ENCODE measurements at regions of chr20 and their contacts with region 1.

Region 1: GRCh38 chr20:62302341-62303058 is at the start of gene ADRM1:
- DNase-seq: peak; percentile 76
- ATAC-seq: peak; percentile 80
- H3K4me3 ChIP-seq: peak within 1 kb of the TSS; percentile 83 to 94
- H3K27ac ChIP-seq: peak within 1 kb of the TSS; percentile 91
- H3K4me1 ChIP-seq: peaks cover 26% of the 10 kb centered on the region
- H3K27me3 ChIP-seq: no peaks in the 10 kb centered on the region
- CTCF ChIP-seq: peak; percentile 92
- total RNA-seq, gene ADRM1: 194 TPM

Region 2: DNA sequence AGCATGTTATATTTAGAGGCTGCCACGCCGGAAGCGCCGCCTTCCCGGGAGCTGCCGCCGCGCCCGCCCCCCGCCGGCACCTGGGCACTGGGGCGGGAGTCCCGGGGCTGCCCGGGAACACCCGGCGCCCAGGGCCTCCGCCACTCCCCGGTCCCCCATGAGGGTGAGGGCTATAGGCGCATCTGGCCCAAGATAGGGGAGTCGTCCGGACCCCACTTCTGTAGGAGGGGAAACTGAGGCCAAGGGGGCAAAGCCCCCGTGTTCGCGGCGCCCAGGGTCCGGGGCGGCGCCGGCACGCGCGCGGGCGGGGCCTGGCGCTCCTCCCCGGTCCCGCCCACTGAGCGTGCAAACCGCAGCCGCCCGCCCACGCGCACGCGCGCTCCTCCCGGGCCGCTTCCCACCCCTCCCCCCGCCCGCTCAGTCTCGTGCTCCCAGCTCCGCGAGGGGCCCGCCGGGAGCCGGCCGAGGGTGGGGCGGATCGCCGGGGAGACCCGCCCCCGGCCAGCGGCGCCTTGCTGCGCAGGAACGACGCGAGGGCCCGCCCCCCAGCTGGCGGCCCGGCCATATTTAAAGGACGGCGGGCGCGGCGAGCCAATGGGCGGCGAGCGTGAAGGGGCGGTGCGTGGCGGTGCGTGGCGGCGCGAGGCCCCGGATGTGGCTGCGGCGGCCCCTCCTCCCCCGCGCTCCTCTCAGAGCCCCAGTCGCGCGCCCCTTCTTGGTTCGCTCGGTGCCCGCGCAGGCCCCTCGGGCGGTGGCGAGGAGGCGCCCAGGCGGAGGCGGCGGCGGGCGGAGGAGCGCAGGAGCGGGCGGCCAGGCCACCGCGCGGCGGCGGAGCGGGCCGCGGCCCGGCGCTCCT is 180.5 kb before region 1 on chr20 and contains the start of gene LSM14B:
- CTCF ChIA-PET with region 1: interaction called, 12 read pairs
- POLR2A ChIA-PET with region 1: no interaction called
- in situ Hi-C with region 1: no loop called
- intact Hi-C with region 1: no loop called
- DNase-seq: peak; percentile 65
- ATAC-seq: peak; percentile 90
- H3K4me3 ChIP-seq: peak within 1 kb of the TSS; percentile 70 to 80
- H3K27ac ChIP-seq: peak within 1 kb of the TSS; percentile 90
- H3K4me1 ChIP-seq: peaks cover 22% of the 10 kb centered on the region
- H3K27me3 ChIP-seq: no peaks in the 10 kb centered on the region
- CTCF ChIP-seq: no peak
- total RNA-seq, gene LSM14B: 52.2 TPM

Region 3: DNA sequence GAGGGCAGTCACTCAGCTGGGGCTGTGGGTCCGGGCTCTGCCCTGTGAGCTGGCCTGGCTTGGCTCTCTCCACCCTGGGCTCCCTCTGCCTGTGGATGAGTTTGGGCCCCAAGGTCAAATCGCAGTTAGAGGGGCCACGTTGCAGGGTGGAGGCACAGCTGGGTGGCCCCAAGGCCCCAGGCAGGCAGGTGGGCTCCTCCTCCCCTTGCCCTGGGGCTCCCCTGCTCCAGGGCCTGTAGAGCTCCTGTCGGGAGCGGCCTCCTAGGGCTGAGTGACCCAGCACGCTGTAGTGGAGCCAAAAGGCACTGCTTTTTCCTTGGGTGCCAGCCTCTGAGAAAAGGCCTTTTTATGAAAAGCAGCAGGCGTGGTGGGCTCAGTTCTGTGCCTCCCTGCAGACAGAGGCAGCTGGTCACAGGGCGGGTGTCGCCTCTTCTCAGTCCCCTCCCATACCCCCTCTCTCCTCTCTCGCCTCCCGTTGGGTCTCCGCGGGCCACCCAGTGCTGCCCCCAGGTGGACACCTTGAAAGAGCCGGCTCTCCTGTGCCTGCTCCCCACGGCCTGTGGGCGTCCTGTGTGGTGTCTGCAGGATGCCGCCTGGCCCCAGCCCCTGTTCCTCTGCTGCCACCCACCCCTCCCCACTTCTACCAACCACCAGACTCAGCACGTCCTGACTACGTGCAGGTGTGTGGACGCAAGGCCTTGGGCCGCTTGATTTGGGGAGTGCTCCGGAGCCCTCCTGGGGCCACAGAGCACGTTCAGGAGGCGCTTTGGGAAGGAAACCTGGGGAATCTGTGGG is 145.7 kb before region 1 on chr20:
- CTCF ChIA-PET with region 1: no interaction called
- POLR2A ChIA-PET with region 1: no interaction called
- in situ Hi-C with region 1: no loop called
- intact Hi-C with region 1: no loop called
- DNase-seq: no peak
- ATAC-seq: peak; percentile 82
- H3K4me3 ChIP-seq: no peak overlapping the region
- H3K27ac ChIP-seq: no peak overlapping the region
- H3K4me1 ChIP-seq: peaks cover 17% of the 10 kb centered on the region
- H3K27me3 ChIP-seq: no peaks in the 10 kb centered on the region
- CTCF ChIP-seq: peak; percentile 92

Region 4: DNA sequence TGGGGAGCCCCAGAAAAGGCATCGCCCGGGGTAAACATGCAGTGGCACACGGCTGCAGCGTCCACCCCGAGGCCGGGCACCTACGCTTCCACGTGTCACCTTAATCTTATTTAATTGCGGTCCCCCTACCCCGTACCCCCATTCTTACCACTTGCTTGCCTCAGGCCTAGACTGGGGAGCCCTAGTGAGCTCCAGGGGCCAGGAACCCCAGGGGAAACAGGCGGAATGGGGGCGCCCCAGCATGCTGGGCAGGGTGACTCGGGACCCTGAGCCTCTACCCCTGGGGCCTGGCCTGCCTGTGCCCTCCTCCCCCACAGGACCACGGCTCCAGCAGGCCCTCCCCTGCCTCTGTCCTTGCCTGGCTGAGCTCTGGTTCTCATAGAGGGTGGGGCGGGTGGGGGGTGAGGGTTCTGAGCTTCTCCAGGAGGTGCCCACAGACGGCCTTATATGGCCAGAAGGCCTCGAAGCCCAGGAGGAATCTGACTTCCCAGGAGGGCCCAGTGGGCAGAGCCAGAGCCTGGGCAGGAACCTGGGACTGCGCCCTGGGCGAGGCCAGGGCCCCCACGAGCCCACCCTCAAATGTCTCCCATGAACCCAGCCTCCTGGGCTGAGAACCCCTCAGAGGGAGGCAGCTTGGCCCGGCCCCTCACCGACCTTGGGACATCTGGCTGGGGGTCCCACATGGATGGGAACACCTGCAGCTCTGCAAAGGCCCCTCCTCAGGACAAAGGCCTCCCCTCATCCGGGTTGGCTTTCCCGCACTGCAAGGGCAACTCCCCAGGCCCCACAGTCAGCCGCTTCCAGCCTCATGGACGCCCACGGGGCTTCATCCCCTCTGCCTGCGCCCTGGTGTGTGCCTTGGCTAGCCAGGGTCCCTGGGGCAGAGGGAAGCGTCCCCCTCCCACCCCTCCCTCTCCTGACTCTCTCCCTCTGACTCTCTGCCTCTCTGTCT is 69.8 kb after region 1 on chr20:
- CTCF ChIA-PET with region 1: interaction called, 6 read pairs
- POLR2A ChIA-PET with region 1: interaction called, 12 read pairs
- in situ Hi-C with region 1: no loop called
- intact Hi-C with region 1: no loop called
- DNase-seq: no peak
- ATAC-seq: no peak
- H3K4me3 ChIP-seq: no peak overlapping the region
- H3K27ac ChIP-seq: peak overlapping the region; percentile 58; the same call in 1 of the 2 replicates
- H3K4me1 ChIP-seq: peaks cover 84% of the 10 kb centered on the region
- H3K27me3 ChIP-seq: no peaks in the 10 kb centered on the region
- CTCF ChIP-seq: no peak